PC-9 (cell line): ENCODE measurements at regions of chr7 and their contacts with region 1.

Region 1: DNA sequence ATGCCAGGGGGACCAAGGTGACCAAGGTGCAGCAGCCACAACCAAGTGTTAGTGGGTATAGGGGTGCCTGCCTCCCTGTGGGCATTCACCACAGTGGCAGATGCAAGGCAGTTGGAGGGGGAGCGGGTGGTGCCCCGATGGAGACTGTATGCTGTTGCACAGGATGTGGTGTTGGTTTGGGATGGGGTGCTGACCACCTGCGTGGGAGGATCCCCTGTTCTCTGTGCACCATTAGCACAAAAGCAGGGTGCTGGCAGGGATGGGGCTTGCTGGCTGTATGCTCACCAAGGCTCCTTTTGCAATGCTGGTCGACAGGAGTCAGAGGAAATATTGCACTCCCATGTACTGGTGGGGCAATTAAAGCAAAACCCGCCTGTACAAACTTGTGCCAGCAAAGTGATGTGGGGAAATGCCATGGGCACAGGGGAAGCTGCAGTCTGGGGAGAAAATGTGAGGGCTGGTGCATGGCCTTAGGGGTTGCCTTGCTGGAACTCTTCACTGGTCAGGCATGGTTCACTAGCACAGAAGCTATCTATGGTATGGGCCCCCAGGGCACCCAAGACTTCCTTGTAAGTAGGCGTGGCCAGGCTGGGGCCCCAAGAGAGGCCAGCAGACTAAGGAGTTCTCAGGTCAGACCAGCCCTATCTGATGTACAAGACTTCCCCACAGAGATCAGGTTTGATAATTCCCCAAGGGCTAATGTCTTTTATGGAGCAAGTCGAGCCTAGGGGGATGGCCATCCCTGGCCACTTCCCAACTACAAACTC is 51.9 kb upstream of the GNAT3 start:
- DNase-seq: peak; percentile 95
- H3K4me3 ChIP-seq: no peak overlapping the region
- H3K27ac ChIP-seq: peak overlapping the region; percentile 33
- H3K4me1 ChIP-seq: peaks cover 20% of the 10 kb centered on the region
- H3K27me3 ChIP-seq: no peaks in the 10 kb centered on the region
- CTCF ChIP-seq: no peak

Region 2: DNA sequence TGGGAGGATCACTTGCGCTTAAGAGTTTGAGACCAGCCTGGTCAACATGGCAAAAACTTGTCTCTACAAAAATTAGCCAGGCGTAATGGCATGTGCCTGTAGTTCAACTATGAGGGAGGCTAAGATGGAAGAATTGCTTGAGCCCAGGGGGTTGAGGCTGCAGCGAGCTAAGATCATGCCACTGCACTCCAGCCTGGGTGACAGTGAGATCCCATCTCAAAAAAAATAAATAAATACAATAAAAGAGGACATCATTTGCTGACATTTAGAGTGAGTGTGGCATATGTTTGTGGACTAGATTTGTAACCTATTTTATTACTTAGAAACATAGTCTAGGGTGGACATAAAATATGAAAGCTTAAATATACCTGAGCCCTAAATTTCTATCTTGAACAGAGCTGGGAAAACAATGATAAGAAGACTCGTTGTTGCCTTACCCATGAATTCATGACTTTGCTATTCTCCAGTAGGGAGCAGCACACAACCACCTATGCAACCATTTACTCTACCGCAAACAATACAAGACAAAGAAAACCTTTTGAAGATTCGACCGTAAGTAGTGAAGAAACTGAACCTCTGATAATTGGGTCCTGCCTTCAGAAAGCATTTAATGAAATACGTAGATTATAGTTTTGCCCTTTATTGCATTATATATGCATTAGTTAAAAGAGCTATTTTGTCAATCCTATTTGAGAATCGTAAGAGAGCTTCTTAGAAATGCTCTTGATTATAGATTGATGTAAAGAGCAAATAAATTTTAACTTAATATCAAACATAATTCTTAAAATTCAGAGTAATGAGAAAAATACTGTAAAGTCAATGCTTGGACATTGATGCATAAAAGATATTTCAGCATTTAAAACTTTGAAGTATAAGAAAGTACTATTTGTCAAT is 135.3 kb before region 1 on chr7:
- CTCF ChIA-PET with region 1: no interaction called
- POLR2A ChIA-PET with region 1: no interaction called
- intact Hi-C with region 1: loop called (anchors 1 kb)
- DNase-seq: peak; percentile 35 to 50
- H3K4me3 ChIP-seq: no peak overlapping the region
- H3K27ac ChIP-seq: no peak overlapping the region
- H3K4me1 ChIP-seq: no peaks in the 10 kb centered on the region
- H3K27me3 ChIP-seq: no peaks in the 10 kb centered on the region
- CTCF ChIP-seq: peak; percentile 75

Region 3: DNA sequence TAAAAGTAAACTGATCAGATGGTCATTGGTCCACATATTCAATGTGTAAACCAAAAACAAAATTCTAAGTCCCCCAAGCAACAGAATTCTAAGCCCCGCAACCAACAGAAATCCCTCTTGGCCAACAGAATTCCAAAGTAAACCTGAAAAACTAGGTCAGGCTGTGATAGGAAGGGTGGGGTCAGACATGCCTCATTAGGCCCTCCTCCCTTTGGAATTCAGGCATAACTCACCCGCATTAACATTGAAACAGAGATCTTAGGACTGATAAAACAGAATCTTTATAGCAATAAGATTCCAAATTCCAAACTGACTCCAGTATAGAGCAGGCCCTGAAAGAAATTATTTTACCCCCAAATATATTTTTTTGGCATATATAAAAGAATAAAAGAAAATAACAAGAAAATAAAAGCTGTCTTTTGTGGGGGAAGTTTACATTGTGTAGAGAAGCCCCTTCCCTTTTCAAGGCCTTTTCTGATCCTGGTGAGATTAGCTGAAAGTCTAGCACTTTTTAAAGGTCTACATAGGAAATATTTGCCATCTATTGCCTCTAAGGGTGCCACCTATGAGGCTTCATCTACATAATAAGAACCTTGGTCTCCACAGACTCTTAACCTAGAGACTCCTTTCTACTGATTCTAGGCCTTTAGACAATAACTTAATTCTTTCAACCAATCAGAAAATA is 82.4 kb before region 1 on chr7:
- CTCF ChIA-PET with region 1: no interaction called
- POLR2A ChIA-PET with region 1: no interaction called
- intact Hi-C with region 1: loop called (anchors 1 kb)
- DNase-seq: peak; percentile 64 to 80
- H3K4me3 ChIP-seq: no peak overlapping the region
- H3K27ac ChIP-seq: peak overlapping the region; percentile 28; the same call in 1 of the 2 replicates
- H3K4me1 ChIP-seq: peaks cover 16% of the 10 kb centered on the region
- H3K27me3 ChIP-seq: no peaks in the 10 kb centered on the region
- CTCF ChIP-seq: no peak

Region 4: DNA sequence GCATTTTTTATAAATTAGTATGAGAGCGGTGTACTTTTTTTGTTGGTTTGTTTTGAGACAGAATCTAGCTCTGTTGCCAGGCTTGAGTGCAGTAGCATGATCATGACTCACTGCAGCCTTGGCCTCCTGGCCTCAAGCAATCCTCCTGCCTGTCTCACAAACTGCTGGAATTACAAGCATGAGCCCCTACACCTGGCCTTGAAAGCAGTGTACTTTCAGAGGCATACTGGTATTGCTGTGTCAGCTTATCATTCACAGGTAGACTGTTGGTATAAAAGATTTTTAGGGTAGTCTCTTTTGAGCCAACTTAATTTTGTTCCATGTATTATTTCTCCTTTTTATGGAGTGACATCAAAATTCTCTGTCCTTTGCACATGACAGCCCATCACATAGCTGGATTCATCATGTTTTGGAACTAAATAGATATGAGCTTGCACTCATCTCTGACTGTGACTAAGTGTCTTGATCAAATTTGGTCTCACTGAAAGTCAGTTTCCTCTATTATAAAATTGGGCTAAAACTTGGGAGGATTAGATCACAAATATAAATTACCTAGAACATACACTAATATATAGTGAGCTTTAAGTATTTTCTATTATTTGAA is 64.3 kb before region 1 on chr7:
- CTCF ChIA-PET with region 1: no interaction called
- POLR2A ChIA-PET with region 1: no interaction called
- intact Hi-C with region 1: loop called (anchors 1 kb)
- DNase-seq: peak; percentile 82 to 93
- H3K4me3 ChIP-seq: peak overlapping the region; percentile 1; the same call in 1 of the 2 replicates
- H3K27ac ChIP-seq: peak overlapping the region; percentile 69
- H3K4me1 ChIP-seq: peaks cover 25% of the 10 kb centered on the region
- H3K27me3 ChIP-seq: no peaks in the 10 kb centered on the region
- CTCF ChIP-seq: no peak

Region 5: DNA sequence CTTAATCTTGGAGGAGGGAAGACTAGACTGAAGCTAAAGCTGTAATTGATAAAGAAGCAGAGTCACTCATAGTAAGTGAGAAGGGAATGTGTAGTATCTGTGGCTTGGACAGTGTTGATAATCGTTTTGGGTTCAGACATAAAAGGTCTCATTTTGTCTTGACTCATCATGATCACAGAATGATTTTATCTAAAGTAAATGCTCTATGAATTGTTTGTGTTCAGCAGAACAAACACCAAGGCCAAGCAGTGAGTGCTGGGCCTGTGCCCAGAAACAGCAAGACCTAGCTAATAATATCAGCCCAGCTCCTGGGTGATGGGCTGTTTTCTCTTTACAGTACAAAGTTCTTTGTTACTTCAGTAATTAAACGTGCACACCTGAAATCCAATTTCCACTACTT is 48.0 kb after region 1 on chr7:
- CTCF ChIA-PET with region 1: no interaction called
- POLR2A ChIA-PET with region 1: no interaction called
- intact Hi-C with region 1: loop called (anchors 1 kb)
- DNase-seq: peak; percentile 37 to 61
- H3K4me3 ChIP-seq: no peak overlapping the region
- H3K27ac ChIP-seq: peak overlapping the region; percentile 20
- H3K4me1 ChIP-seq: peaks cover 19% of the 10 kb centered on the region
- H3K27me3 ChIP-seq: no peaks in the 10 kb centered on the region
- CTCF ChIP-seq: no peak

Region 6: GRCh38 chr7:80643336-80643915 is 79.7 kb after region 1 on chr7:
- CTCF ChIA-PET with region 1: no interaction called
- POLR2A ChIA-PET with region 1: no interaction called
- intact Hi-C with region 1: loop called (anchors 1 kb)
- DNase-seq: peak; percentile 6 to 87
- H3K4me3 ChIP-seq: 0 out of 2 replicates have a peak overlapping the region, but pooled peaks have one; percentile 16
- H3K27ac ChIP-seq: peak overlapping the region; percentile 51
- H3K4me1 ChIP-seq: peaks cover 16% of the 10 kb centered on the region
- H3K27me3 ChIP-seq: no peaks in the 10 kb centered on the region
- CTCF ChIP-seq: no peak

Region 7: GRCh38 chr7:80659120-80660055 is 95.6 kb after region 1 on chr7:
- CTCF ChIA-PET with region 1: interaction called, 3 read pairs
- POLR2A ChIA-PET with region 1: no interaction called
- intact Hi-C with region 1: loop called (anchors 1 kb)
- DNase-seq: no peak
- H3K4me3 ChIP-seq: no peak overlapping the region
- H3K27ac ChIP-seq: no peak overlapping the region
- H3K4me1 ChIP-seq: no peaks in the 10 kb centered on the region
- H3K27me3 ChIP-seq: no peaks in the 10 kb centered on the region
- CTCF ChIP-seq: peak; percentile 96

Region 8: DNA sequence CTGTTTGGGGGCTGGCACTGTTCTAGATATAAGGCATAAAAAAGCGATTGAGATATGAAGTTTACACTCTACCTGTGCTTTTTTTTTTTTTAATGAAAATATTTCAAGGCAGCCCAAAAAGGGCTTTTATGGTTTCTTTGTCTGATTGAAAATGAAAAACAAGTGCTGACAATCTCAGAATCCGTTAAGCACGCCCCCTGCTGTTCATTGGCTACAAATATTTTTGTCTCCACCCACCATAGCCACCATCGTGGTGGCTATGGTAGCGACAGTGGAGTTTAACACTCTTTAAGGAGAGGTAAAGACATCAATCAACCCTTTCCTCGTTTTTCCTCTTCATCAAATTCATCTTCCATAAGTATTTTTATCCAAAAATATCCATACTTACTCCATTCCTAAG is 168.9 kb after region 1 on chr7:
- CTCF ChIA-PET with region 1: no interaction called
- POLR2A ChIA-PET with region 1: no interaction called
- intact Hi-C with region 1: no loop called
- DNase-seq: no peak
- H3K4me3 ChIP-seq: no peak overlapping the region
- H3K27ac ChIP-seq: no peak overlapping the region
- H3K4me1 ChIP-seq: 0 out of 2 replicates have a peak, but pooled peaks cover 7% of the 10 kb centered on the region
- H3K27me3 ChIP-seq: no peaks in the 10 kb centered on the region
- CTCF ChIP-seq: peak; percentile 49; the same call in 1 of the 2 replicates

Region 9: DNA sequence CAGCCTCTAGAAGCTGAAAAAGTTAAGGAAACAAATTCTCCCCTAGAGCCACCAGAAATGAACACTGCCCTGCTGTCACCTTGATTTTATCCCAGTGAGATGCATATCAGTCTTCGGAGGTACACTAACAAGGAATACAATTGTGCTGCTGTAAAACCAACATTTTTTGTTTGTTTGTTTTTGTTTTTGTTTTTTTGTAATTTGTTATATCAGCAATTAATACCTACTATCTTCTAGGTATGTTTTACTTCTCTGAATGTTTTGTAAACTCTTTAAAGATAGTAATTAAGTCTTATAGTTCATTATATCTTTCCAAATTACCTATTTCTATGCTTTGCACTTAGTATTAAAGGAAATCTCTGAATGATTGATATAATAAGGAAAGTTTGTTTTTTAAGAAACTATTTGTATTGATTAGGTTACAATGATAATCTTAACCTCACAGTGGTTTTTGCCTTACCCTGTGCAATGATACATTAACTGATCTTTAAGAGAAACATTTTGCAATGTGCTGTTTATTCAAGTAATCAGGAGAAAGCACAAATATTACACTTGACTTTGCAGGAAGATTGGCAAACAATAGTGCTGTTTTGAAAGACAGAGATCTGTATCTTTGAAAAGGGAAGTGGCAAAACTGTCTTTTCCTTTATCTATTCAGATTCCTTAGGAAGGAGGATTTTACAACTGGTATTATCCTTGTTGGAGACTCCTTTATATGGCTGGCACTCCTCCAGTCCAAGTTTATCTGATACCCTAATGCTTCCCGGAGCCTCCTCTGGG is 1217.4 kb after region 1 on chr7:
- CTCF ChIA-PET with region 1: no interaction called
- POLR2A ChIA-PET with region 1: no interaction called
- intact Hi-C with region 1: no loop called
- DNase-seq: no peak
- H3K4me3 ChIP-seq: no peak overlapping the region
- H3K27ac ChIP-seq: no peak overlapping the region
- H3K4me1 ChIP-seq: no peaks in the 10 kb centered on the region
- H3K27me3 ChIP-seq: no peaks in the 10 kb centered on the region
- CTCF ChIP-seq: no peak